Activated CD8-positive, alpha-beta T cell treated with anti-CD3 and anti-CD28 coated beads, Interleukin-2, amount 10 ng/mL, durations not matched to agents 7 days and 5 days (primary cell): ENCODE measurements at regions of chr1 and their contacts with region 1.

Region 1: GRCh38 chr1:101238681-101239094 is 1.9 kb downstream of the S1PR1 start:
- DNase-seq: peak; percentile 92
- ATAC-seq: peak; percentile 53
- H3K4me3 Mint-ChIP-seq: peak overlapping the region; percentile 98
- H3K27ac Mint-ChIP-seq: peak overlapping the region; percentile 95
- H3K4me1 Mint-ChIP-seq: peaks cover 69% of the 10 kb centered on the region
- H3K27me3 Mint-ChIP-seq: no peaks in the 10 kb centered on the region

Region 2: DNA sequence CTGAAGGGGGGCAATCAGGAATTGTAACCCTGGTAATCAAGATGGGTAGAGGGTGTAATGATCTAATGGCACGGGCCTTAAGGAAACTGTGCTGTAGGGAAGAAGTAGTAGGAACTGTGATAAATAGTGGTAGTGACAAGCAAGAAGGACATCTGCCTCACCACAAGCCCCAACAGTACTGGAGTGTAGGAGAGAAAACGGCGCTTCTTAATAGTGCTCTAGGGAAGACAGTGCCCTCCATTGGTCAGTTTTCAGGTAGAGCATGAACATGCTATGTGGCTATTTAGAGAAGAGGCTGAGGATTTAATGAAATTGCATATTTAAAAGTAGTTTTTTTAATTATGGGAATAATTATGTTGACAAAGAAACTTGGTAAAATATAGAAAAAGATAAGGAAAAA is 310.6 kb before region 1 on chr1:
- CTCF ChIA-PET with region 1: interaction called, 10 read pairs
- POLR2A ChIA-PET with region 1: interaction called, 31 read pairs
- DNase-seq: no peak
- ATAC-seq: peak; percentile 36
- H3K4me3 Mint-ChIP-seq: no peak overlapping the region
- H3K27ac Mint-ChIP-seq: no peak overlapping the region
- H3K4me1 Mint-ChIP-seq: peaks cover 48% of the 10 kb centered on the region
- H3K27me3 Mint-ChIP-seq: no peaks in the 10 kb centered on the region

Region 3: DNA sequence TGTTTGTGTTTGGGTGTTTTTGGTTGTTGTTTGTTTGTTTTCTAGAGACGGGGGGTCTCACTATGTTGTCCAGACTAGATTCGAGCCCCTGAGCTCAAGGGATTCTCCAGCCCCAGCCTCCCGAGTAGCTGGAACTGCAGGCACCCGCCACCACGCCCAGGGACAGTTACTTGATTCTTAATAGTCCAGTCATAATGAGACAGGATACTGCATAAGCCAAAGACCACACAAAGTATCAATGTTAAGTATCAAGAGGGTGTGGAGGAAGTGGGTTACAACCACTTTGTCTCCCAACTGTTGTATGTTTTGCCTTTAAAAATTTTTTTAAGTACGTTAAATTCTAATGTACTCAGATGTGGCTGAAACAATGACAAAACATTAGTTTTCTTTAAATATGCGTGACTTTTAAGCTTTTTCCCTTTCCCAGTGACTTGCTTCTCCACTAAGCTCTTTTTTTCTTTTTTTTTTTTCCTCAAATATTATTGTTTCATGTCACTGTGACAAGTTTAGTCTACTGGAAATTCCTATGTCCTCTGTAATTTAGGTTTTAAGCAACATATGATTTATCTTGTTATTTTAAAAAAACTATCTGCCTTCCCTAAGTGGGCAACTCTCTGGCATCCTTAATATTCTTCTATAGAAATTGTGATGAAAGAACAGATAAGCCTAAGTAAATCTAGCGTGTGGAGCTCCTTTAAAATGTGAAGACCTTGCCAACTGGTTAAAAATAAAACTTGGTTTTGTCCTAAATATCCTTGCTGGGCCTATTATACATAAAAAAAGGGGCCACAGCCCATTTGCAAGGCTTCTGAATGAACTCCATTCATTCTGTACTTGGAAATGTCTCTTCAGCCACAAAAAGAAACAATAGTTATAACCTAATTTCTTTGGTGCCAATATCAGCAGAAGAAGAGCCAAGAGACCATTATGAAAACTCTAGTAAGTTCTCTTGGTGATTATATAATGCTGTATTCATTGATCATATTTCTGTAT is 156.9 kb before region 1 on chr1:
- CTCF ChIA-PET with region 1: interaction called, 7 read pairs
- POLR2A ChIA-PET with region 1: interaction called, 14 read pairs
- DNase-seq: peak; percentile 78
- ATAC-seq: peak; percentile 99
- H3K4me3 Mint-ChIP-seq: peak overlapping the region; percentile 34
- H3K27ac Mint-ChIP-seq: peak overlapping the region; percentile 94
- H3K4me1 Mint-ChIP-seq: peaks cover 63% of the 10 kb centered on the region
- H3K27me3 Mint-ChIP-seq: no peaks in the 10 kb centered on the region

Region 4: DNA sequence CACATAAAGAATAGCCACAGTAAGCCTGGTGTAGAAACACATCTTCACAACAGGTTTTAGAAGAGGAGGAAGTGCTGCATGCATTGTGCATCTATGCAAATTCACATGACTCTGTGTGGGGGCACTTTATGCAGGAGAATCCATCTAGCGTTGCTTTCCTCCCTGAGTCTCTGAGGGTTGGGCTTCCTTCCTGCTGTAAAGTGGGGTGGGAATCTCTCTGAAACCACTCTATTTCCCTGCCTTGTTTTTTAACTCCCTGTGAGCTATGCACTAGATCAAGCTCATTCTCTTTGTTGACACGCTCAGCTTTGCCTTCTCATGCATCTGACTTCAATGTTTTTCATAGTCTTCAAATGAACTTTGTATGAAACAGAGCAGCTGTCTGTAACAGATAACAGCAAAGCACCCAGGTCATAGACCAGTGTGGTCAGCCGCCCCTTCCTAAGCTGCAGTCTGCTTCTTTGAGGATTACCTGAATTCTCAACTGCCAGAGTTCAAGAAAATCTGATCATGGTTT is 110.4 kb before region 1 on chr1:
- CTCF ChIA-PET with region 1: interaction called, 28 read pairs
- POLR2A ChIA-PET with region 1: interaction called, 63 read pairs
- DNase-seq: peak; percentile 47
- ATAC-seq: peak; percentile 74
- H3K4me3 Mint-ChIP-seq: peak overlapping the region; percentile 58
- H3K27ac Mint-ChIP-seq: peak overlapping the region; percentile 81
- H3K4me1 Mint-ChIP-seq: peaks cover 78% of the 10 kb centered on the region
- H3K27me3 Mint-ChIP-seq: no peaks in the 10 kb centered on the region

Region 5: DNA sequence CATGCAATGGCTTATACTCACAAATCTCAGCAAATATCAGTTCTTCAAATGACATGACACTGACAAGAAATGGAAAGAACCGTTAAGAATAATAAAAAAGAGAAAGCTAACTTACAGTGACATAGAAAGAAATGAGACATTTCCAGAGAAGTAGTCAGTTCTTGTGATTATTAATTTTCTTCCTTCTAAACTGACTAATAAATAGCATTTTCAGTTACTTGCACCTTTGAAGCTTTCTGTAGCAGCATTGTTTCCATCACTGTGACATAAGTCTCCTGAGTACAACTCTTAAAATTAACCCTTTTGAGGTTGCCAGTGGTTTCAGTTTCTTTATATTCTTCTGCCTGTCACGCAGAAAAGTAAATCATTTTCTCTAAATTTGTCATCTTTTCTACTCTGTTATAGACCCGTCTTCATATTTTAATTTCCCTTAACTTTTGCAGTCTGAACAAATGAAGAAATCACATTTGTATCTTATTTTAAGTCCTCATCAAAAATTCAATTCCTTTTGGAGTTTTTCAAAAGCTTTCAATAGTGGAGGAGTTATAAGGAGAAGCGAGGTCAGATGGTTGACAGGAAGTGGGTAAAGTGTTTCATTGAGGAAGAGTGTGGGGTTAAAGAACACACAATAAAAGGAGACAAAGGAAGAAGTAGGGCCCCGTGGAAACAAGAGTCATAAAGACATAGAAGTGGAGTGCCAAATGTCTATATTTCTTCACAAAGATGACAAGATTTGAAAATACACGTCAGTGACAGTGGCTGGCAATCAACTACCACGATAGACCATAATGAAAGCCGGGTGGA is 59.8 kb before region 1 on chr1:
- CTCF ChIA-PET with region 1: interaction called, 36 read pairs
- POLR2A ChIA-PET with region 1: interaction called, 89 read pairs
- DNase-seq: peak; percentile 60
- ATAC-seq: peak; percentile 86
- H3K4me3 Mint-ChIP-seq: peak overlapping the region; percentile 81
- H3K27ac Mint-ChIP-seq: peak overlapping the region; percentile 97
- H3K4me1 Mint-ChIP-seq: peaks cover 61% of the 10 kb centered on the region
- H3K27me3 Mint-ChIP-seq: no peaks in the 10 kb centered on the region

Region 6: GRCh38 chr1:101278845-101279244 is 40.2 kb after region 1 on chr1:
- CTCF ChIA-PET with region 1: interaction called, 162 read pairs
- POLR2A ChIA-PET with region 1: interaction called, 9 read pairs
- DNase-seq: no peak
- ATAC-seq: peak; percentile 66
- H3K4me3 Mint-ChIP-seq: peak overlapping the region; percentile 54
- H3K27ac Mint-ChIP-seq: peak overlapping the region; percentile 69
- H3K4me1 Mint-ChIP-seq: peaks cover 69% of the 10 kb centered on the region
- H3K27me3 Mint-ChIP-seq: no peaks in the 10 kb centered on the region

Region 7: DNA sequence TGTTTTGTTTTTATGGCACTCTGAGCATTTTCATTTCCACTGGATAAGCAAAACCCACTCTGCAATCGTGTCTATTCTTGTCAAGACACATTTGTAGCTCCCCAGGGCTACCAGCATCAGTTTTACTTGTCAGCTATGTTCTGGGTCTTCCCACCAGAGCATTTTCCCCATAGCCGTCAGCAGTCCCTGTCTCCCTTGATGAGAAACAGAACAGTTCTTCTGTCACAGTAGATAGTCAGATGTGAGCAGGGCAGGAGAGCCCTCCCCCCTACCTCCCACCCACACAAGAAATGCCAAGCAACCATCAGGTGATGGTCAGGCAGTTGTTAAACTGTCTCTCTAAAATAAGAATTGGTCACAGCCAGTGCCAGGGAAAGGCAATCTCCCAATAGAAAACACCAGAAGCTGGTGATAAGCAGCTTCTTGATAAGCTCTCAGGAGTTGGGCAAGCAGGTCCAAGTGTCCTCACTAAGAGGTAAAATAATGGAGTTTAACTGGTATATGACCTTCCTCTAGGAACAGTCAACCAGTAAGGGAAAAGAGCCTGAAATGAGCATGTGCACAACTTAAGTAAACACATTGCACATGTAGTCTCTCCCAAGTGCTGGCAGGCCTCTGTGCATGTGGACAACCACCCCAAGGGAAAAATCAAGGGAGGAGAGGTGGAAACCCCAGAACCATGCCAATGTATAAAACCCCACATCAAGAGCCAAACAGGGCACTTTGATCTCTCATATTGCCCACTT is 206.4 kb after region 1 on chr1:
- CTCF ChIA-PET with region 1: no interaction called
- POLR2A ChIA-PET with region 1: no interaction called
- DNase-seq: no peak
- ATAC-seq: no peak
- H3K4me3 Mint-ChIP-seq: no peak overlapping the region
- H3K27ac Mint-ChIP-seq: no peak overlapping the region
- H3K4me1 Mint-ChIP-seq: no peaks in the 10 kb centered on the region
- H3K27me3 Mint-ChIP-seq: peaks cover 18% of the 10 kb centered on the region